Activated CD4-positive, alpha-beta memory T cell treated with anti-CD3 and anti-CD28 coated beads for 36 hours (primary cell): ENCODE measurements at regions of chr9 and their contacts with region 1.

Region 1: GRCh38 chr9:136283291-136284235 is 20.3 kb downstream of the CCDC187 start:
- DNase-seq: peak; percentile 82
- H3K4me3 Mint-ChIP-seq: no peak overlapping the region
- H3K27ac Mint-ChIP-seq: no peak overlapping the region
- H3K4me1 Mint-ChIP-seq: peaks cover 5% of the 10 kb centered on the region
- H3K27me3 Mint-ChIP-seq: peaks cover 4% of the 10 kb centered on the region

Region 2: DNA sequence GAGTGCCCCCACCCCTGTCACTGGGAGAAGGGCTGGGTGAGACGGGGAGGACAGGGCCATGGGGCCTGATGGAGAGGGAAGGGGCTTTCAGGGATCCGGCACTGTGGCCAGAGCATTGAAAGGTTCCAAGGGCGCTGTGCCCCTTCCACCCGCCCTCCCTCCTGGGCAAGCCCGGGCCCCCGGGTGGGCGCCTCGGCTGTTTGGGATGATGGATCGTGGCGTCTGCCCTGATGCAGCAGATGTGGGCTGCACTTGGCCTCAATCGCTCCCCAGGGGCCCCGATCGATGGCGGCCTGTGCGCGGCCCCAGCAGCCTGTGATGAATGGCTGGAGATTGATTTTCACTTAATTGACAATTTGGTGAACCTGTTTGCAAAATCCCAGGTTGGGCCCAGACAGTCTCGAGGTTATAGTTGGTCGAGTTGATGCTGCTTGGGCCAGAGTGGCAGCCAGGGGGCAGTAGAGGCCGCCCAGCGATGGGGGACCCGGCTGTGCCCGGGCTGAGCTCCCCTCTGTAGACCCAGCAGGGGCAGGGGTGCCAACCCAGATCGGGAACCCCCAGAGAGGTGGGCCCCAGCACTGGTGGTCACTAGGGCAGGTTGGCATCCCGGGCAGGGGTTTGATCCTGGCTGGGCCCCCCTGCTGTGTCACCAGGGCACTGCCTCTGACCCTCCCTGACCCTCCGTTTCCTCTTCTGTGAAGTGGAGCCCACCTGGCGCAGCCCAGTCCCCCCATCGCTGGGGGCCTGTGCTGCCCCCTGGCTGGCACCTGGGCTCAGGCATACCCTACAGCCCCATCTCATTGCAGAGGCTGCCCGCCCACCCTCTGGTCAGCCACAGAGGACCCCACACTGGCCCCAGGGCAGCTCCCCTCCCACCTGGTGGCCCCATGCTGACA is 113.3 kb before region 1 on chr9:
- CTCF ChIA-PET with region 1: interaction called, 19 read pairs
- POLR2A ChIA-PET with region 1: no interaction called
- intact Hi-C with region 1: loop called (anchors 1 kb)
- DNase-seq: peak; percentile 71
- H3K4me3 Mint-ChIP-seq: no peak overlapping the region
- H3K27ac Mint-ChIP-seq: no peak overlapping the region
- H3K4me1 Mint-ChIP-seq: no peaks in the 10 kb centered on the region
- H3K27me3 Mint-ChIP-seq: peaks cover 17% of the 10 kb centered on the region

Region 3: DNA sequence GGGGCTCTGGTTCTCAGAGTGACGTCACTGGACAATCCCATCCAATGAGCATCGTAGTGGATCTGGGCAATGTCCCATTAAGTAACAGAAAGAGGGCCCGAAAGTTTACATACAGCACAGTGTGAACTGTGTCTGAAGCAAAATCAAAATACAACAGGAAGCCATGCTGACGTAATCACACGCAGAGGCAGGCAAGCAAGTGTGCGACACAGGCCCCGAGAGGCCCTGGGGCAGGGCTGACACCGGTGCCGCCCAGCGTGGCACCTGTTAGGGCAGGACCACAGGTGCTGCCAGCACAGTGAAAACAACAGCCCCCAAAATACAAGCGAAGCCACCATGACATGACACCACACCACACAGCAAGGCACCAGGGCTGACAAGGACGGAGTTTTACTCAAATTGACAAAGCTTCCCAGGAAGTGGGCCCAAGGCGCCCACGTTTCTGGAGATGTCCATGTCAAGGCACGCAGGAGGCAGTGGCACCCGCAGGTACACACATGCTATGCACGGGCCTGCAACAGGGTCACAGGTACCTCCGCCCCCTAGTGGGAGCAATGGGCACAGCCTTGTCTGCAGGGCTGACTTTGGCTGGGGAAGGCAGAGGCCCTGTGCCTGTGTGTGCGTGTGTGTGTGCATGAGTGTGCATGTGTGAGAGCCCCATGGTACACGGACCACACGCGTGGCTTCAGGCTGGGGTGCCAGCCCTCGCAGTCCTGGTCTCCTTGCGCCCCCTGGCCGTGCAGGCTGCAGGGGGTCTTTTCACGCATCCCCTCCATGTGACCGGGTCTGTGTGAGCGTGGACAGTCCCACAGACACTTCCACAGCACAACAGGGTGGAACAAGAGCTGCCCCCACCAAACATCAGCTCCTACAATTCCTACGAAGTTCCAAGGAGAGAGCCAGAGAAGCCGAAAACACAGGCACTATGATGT is 57.5 kb before region 1 on chr9:
- CTCF ChIA-PET with region 1: no interaction called
- POLR2A ChIA-PET with region 1: no interaction called
- intact Hi-C with region 1: no loop called
- DNase-seq: peak; percentile 81
- H3K4me3 Mint-ChIP-seq: peak overlapping the region; percentile 44
- H3K27ac Mint-ChIP-seq: peak overlapping the region; percentile 82
- H3K4me1 Mint-ChIP-seq: peaks cover 26% of the 10 kb centered on the region
- H3K27me3 Mint-ChIP-seq: no peaks in the 10 kb centered on the region